ENCODE measurements at regions of chr16 and their contacts with region 1.

Region 1: GRCh38 chr16:15672514-15673167 is 22.6 kb downstream of the NDE1 start:
- DNase-seq: peak; percentile 93 to 96 (median 93)
- H3K4me3 ChIP-seq: peak overlapping the region; percentile 26 to 69 (median 32)
- H3K4me3 Mint-ChIP-seq: peak overlapping the region; percentile 78 to 88
- H3K27ac ChIP-seq: peak overlapping the region; percentile 97 to 98
- H3K27ac Mint-ChIP-seq: peak overlapping the region; percentile 98 to 99 (median 99)
- H3K4me1 ChIP-seq: peaks cover 37 to 52% of the 10 kb centered on the region in 2 donors
- H3K4me1 Mint-ChIP-seq: peaks cover 54% of the 10 kb centered on the region
- H3K27me3 ChIP-seq: no peaks in the 10 kb centered on the region
- H3K27me3 Mint-ChIP-seq: peaks cover 0 to 7% (median 2%) of the 10 kb centered on the region in 3 donors
- CTCF ChIP-seq: no peak

Region 2: DNA sequence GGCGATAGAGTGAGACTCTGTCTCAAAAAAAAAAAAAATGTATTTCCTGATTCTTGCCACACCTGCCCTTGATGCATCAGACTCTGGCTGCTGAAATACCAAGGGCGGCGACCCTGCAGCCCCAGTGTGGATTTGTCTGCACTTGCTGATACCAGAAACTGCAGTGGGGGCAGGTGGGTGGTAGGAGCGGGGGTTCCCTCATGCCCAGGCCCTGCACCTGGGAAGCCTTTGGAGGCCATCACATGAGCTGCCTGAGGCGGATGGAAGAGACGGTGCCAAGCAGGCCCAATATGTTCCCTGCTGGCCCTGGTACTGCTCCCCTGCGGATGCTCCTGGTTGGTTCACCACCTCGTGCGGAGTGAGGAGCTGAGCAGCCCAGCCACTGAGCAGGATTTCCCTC is 80.3 kb before region 1 on chr16:
- intact Hi-C with region 1: loop called in 1 of 2 experiments (anchors 10 kb)
- DNase-seq: peak; percentile 22 to 41 (median 28)
- H3K4me3 ChIP-seq: peak overlapping the region in 1 of 3 experiments; percentile 26
- H3K4me3 Mint-ChIP-seq: no peak overlapping the region
- H3K27ac ChIP-seq: peak overlapping the region; percentile 63 to 82
- H3K27ac Mint-ChIP-seq: peak overlapping the region; percentile 90 to 99 (median 94)
- H3K4me1 ChIP-seq: peaks cover 74 to 80% of the 10 kb centered on the region in 2 donors
- H3K4me1 Mint-ChIP-seq: peaks cover 78% of the 10 kb centered on the region
- H3K27me3 ChIP-seq: no peaks in the 10 kb centered on the region
- H3K27me3 Mint-ChIP-seq: no peaks in the 10 kb centered on the region
- CTCF ChIP-seq: no peak

Region 3: DNA sequence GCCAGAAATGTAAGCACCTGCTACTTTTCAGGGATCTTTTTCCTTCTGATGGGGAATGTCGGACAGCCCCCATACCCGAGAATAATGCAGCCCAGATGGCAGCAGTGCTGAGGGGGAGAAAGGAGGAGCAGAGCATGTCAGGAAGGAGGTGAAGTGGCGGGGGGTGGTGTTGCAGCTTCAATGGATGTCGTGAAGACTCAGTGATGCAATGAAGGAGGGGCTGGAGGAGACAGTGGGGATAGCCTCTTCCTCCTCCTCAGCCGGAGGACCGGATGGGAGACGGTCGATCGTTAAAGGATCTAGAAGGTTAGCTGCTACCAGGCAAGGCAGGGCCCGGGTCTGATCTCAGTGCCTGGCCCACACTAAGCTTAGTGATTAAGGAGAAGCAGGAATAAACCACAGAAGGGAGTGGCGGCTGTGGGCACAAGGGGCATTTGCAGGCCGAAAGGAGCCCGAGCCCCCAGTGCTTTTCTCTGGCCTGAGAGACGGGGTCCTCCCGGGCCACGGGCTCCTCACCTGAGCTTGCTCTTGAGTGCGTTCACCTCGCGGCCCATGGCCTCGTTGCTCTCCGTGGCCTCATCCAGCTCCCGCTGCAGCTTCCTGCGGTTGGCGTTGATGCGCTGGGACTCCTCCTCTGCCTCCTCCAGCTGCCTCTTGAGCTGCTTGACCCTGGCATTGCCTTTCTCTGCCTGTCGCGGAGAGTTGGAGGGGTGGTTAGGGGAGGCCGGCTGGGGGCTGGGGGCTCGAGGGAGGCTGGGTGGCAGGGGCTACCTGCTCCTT is 41.9 kb after region 1 on chr16:
- intact Hi-C with region 1: no loop called
- DNase-seq: no peak
- H3K4me3 ChIP-seq: no peak overlapping the region
- H3K4me3 Mint-ChIP-seq: no peak overlapping the region
- H3K27ac ChIP-seq: no peak overlapping the region
- H3K27ac Mint-ChIP-seq: peak overlapping the region in 1 of 7 donors; percentile 49
- H3K4me1 ChIP-seq: no peaks in the 10 kb centered on the region
- H3K4me1 Mint-ChIP-seq: no peaks in the 10 kb centered on the region
- H3K27me3 ChIP-seq: no peaks in the 10 kb centered on the region
- H3K27me3 Mint-ChIP-seq: peaks cover 0 to 2% (median 0%) of the 10 kb centered on the region in 3 donors
- CTCF ChIP-seq: no peak